Mammary epithelial cell (primary cell): ENCODE measurements at regions of chr10 and their contacts with region 1.

Region 1: GRCh38 chr10:107971973-107972372 is 807.5 kb upstream of the SORCS1 start:
- DNase-seq: peak; percentile 98
- H3K4me3 ChIP-seq: no peak overlapping the region
- H3K27ac ChIP-seq: peak overlapping the region; percentile 91
- H3K4me1 ChIP-seq: peaks cover 22% of the 10 kb centered on the region
- H3K27me3 ChIP-seq: no peaks in the 10 kb centered on the region
- CTCF ChIP-seq: no peak

Region 2: DNA sequence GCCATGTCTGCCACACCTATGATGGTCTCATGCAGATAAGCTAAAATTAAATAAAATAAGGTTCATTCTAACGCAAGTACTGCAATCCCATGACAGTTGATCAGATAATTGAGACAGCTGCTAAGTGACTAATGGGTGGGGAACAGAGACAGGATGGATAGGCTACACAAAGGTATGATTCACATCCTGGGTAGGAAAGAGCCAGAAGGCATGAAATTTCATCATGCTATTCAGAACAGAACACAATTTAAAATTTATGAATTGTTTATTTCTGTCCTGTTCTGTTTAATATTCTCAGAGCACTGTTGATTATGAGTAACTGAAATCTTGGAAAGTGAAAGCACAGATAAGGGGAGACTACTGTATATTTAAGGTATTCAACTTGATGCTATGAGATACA is 425.7 kb before region 1 on chr10:
- CTCF ChIA-PET with region 1: no interaction called
- dilution Hi-C with region 1: no loop called
- in situ Hi-C with region 1: no loop called
- intact Hi-C with region 1: loop called (anchors 10 kb)
- DNase-seq: peak; percentile 92
- H3K4me3 ChIP-seq: peak overlapping the region; percentile 26 to 39 (median 36)
- H3K27ac ChIP-seq: peak overlapping the region; percentile 74
- H3K4me1 ChIP-seq: peaks cover 19% of the 10 kb centered on the region
- H3K27me3 ChIP-seq: no peaks in the 10 kb centered on the region
- CTCF ChIP-seq: no peak

Region 3: DNA sequence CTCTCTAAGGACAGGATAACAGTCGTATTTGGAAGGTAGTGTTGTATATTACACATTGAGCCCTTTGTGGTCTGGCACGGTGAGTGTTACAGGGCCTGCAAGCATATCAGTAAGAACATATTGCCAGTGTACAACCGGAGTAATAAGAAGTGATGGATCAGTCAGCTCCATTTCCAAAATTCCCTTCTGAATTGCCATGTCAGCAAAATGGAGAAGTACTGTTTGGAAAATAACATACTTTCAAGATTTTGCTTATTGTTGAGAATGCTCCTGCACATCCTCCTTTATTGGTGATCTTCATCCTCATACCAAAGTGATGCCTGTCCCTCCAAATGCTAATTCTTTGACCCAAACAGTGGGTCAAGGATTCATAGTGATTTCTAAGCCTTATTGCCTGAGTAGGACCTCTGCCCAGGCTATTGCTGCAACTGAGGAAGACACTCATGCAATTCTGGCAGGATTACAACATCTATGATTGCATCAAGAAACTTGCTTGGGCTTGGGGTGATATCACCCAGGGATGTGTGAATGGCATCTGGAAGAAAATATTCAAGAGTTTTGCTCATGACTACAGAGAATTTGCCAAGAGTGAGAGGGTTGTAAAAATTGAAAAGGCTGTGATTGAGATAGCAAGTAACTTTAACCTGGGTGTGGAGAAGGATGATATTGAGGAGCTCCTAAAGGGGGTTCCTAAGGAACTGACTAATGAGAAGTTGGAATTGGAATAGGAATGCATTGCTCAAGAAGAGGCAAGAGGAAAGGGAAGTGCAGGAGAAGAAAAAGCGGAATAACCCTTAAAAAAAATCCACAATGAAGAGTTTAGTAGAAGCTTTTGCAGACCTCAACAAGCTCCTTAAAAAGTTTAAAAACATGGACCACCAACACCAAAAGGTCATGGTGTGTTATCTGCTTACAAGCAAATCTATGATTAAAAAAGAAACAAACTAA is 355.2 kb before region 1 on chr10:
- CTCF ChIA-PET with region 1: no interaction called
- dilution Hi-C with region 1: no loop called
- in situ Hi-C with region 1: no loop called
- intact Hi-C with region 1: loop called (anchors 10 kb)
- DNase-seq: peak; percentile 87
- H3K4me3 ChIP-seq: no peak overlapping the region
- H3K27ac ChIP-seq: no peak overlapping the region
- H3K4me1 ChIP-seq: peaks cover 14% of the 10 kb centered on the region
- H3K27me3 ChIP-seq: no peaks in the 10 kb centered on the region
- CTCF ChIP-seq: no peak

Region 4: DNA sequence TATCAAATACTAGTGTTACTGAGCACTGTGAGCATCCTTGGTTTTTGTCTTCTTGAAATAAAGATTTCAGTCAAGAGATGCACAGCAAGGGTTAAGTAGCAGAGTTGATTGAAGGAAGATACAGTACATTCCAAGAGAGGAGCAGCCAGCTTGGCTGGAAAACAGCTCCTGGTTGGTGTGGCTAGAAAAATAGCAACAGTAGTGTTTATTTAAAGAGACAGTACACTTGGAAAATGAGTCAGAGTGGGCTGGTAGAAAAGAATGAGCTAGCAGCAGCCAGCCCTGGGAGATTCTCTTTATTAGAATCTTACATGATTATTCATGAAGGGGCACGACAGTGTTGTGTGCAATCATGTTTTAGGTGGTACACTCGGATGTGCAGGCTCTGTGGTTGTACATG is 208.9 kb after region 1 on chr10:
- CTCF ChIA-PET with region 1: no interaction called
- dilution Hi-C with region 1: no loop called
- in situ Hi-C with region 1: no loop called
- intact Hi-C with region 1: loop called (anchors 10 kb)
- DNase-seq: peak; percentile 24
- H3K4me3 ChIP-seq: no peak overlapping the region
- H3K27ac ChIP-seq: no peak overlapping the region
- H3K4me1 ChIP-seq: no peaks in the 10 kb centered on the region
- H3K27me3 ChIP-seq: peaks cover 2% of the 10 kb centered on the region
- CTCF ChIP-seq: no peak

Region 5: DNA sequence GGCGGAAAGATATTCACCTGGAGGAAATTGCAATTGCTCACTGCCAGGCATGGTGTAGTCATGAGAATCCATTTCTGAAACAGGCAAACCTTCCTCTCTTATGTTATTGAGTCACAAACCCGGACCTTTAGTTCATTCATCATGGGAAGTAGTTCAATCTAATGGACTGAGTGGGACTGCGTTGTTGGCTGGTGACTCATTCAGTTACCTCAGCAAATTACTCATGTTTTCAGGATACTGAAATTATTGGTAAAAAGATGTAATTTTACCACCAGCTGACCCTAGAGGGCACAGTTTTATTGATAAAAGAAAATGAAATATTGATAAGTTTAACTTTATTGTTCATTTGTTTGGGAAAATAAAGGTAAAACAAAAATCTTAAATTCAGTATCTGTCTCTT is 386.9 kb after region 1 on chr10:
- CTCF ChIA-PET with region 1: no interaction called
- dilution Hi-C with region 1: no loop called
- in situ Hi-C with region 1: no loop called
- intact Hi-C with region 1: loop called (anchors 5 kb)
- DNase-seq: peak; percentile 96
- H3K4me3 ChIP-seq: no peak overlapping the region
- H3K27ac ChIP-seq: peak overlapping the region; percentile 45
- H3K4me1 ChIP-seq: peaks cover 25% of the 10 kb centered on the region
- H3K27me3 ChIP-seq: no peaks in the 10 kb centered on the region
- CTCF ChIP-seq: peak in 1 of 2 donors; percentile 18